MCF 10A (cell line): ENCODE measurements at regions of chr5 and their contacts with region 1.

Region 1: DNA sequence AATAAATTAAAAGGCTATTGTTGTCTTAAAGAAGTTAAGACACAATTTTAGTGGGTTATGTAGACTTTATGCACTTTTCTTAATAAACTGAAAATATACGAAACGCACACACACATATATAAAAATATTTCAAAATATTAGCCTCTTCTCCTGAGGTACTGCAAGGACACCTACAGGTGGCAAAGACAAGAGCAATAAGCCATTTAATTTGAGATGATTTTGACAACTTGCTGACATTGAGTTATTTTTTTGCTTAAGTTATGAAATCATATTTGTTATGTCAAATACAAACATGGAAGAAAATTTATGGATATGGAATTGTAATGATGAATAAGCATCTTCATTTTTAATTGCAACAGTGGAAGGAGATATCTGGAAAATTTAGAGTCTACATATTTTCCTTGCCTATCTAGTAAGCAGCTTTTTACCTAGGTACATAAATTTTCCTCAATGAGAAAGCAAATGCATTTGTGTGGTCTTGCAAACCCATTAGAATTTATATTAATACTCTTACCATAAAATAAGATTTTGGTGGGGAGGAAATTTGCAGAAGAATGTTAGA is 301.6 kb downstream of the ISL1 start:
- DNase-seq: peak; percentile 8
- H3K4me3 Mint-ChIP-seq: no peak overlapping the region
- H3K27ac Mint-ChIP-seq: no peak overlapping the region
- H3K4me1 Mint-ChIP-seq: no peaks in the 10 kb centered on the region
- H3K27me3 Mint-ChIP-seq: no peaks in the 10 kb centered on the region
- CTCF ChIP-seq: no peak

Region 2: DNA sequence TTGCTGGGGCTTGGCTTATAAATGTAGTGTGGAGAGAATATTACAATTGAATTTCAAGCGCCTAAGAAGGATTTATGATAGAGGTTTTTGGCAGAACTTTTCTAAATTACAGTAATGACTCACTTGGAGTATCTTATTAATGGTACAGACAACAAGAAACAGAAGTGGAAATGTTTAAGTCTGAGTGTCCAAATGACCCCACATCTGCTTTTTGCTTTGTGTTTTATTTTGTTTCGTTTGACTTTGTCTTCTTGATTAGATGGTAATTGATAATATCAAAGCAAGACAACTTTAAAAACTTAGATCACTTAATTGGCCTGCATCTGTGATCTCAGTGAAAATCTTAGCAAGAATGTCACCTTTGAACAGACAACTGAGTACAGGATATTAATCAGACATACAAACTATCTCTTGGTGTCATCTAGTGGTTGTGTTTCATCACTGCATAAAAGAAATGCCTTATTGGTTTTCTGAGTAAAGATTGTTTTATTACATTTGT is 275.8 kb after region 1 on chr5:
- CTCF ChIA-PET with region 1: no interaction called
- POLR2A ChIA-PET with region 1: no interaction called
- intact Hi-C with region 1: loop called (anchors 5 kb)
- DNase-seq: peak; percentile 17
- H3K4me3 Mint-ChIP-seq: no peak overlapping the region
- H3K27ac Mint-ChIP-seq: no peak overlapping the region
- H3K4me1 Mint-ChIP-seq: no peaks in the 10 kb centered on the region
- H3K27me3 Mint-ChIP-seq: no peaks in the 10 kb centered on the region
- CTCF ChIP-seq: peak; percentile 38